HepG2 (cell line): ENCODE measurements at regions of chr22 and their contacts with region 1.

Region 1: GRCh38 chr22:41857155-41857859 is 24.4 kb downstream of the SREBF2 start:
- DNase-seq: peak; percentile 38
- ATAC-seq: peak; percentile 53
- H3K4me3 ChIP-seq: no peak overlapping the region
- H3K27ac ChIP-seq: no peak overlapping the region
- H3K4me1 ChIP-seq: peaks cover 65% of the 10 kb centered on the region
- H3K27me3 ChIP-seq: no peaks in the 10 kb centered on the region
- CTCF ChIP-seq: peak; percentile 50
- EP300 ChIP-seq: no peak
- POLR2A ChIP-seq: no peak
- RAD21 ChIP-seq: no peak

Region 2: GRCh38 chr22:41697126-41697775 is 160.1 kb before region 1 on chr22:
- CTCF ChIA-PET with region 1: no interaction called
- POLR2A ChIA-PET with region 1: no interaction called
- in situ Hi-C with region 1: no loop called
- intact Hi-C with region 1: loop called (anchors 5 kb)
- DNase-seq: peak; percentile 81
- ATAC-seq: peak; percentile 91
- H3K4me3 ChIP-seq: peak overlapping the region; percentile 45 to 66 (median 53); a peak in 4 of 6 replicates
- H3K27ac ChIP-seq: no peak overlapping the region
- H3K4me1 ChIP-seq: peaks cover 16% of the 10 kb centered on the region
- H3K27me3 ChIP-seq: no peaks in the 10 kb centered on the region
- CTCF ChIP-seq: peak; percentile 96
- EP300 ChIP-seq: no peak
- POLR2A ChIP-seq: 0 out of 4 replicates have a peak, but pooled peaks of 1 of the 2 experiments have one; percentile 21
- RAD21 ChIP-seq: peak; percentile 93

Region 3: DNA sequence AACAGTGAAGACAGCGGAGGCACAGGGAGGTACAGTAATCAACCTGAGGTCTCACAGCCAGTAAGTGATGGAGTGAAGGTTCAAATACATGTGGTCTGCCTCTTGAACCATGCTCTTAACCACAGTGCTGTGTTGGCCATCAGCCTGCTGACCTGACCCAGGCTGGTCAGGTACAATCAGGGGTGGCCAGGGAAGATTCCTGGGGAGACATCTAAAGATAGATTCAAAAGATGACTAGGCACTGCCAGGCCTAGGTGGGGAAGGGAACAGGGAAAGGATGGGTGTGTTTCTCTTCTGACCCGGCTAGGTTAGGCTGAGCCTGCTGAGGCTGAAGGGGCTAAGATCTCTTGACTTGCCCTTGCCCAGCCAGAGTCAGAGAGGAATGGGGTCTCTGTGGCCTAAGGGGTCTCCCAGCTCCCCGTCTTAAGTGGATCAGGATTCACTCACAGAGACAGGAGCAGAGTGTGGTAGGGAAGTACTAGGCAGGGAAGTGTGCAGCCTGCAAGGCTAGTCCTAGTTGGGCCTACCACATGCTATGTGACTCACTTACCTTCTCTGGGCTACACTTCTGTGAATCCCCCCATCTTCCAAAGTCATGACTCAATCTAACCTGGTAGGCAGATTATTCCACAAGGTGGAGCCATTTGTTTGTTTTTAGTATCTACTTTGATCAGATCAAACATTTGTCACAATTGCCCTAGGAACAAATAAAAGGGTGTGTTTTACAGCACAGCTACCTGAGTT is 34.8 kb before region 1 on chr22:
- CTCF ChIA-PET with region 1: interaction called, 6 read pairs
- POLR2A ChIA-PET with region 1: no interaction called
- in situ Hi-C with region 1: no loop called
- intact Hi-C with region 1: loop called (anchors 5 kb)
- DNase-seq: peak; percentile 62
- ATAC-seq: peak; percentile 54
- H3K4me3 ChIP-seq: no peak overlapping the region
- H3K27ac ChIP-seq: no peak overlapping the region
- H3K4me1 ChIP-seq: no peaks in the 10 kb centered on the region
- H3K27me3 ChIP-seq: no peaks in the 10 kb centered on the region
- CTCF ChIP-seq: peak; percentile 64
- EP300 ChIP-seq: no peak
- POLR2A ChIP-seq: no peak
- RAD21 ChIP-seq: peak; percentile 63

Region 4: GRCh38 chr22:41891407-41891806 is 34.1 kb after region 1 on chr22:
- CTCF ChIA-PET with region 1: no interaction called
- POLR2A ChIA-PET with region 1: no interaction called
- in situ Hi-C with region 1: no loop called
- intact Hi-C with region 1: loop called (anchors 2 kb)
- DNase-seq: no peak
- ATAC-seq: no peak
- H3K4me3 ChIP-seq: no peak overlapping the region
- H3K27ac ChIP-seq: no peak overlapping the region
- H3K4me1 ChIP-seq: no peaks in the 10 kb centered on the region
- H3K27me3 ChIP-seq: no peaks in the 10 kb centered on the region
- CTCF ChIP-seq: no peak
- EP300 ChIP-seq: no peak
- POLR2A ChIP-seq: no peak
- RAD21 ChIP-seq: no peak